ENCODE measurements at regions of chr7 and their contacts with region 1.

Region 1: GRCh38 chr7:5665094-5666025 is 116.1 kb downstream of the RNF216 start:
- DNase-seq: peak; percentile 77
- H3K4me3 ChIP-seq: no peak overlapping the region
- CTCF ChIP-seq: peak; percentile 84

Region 2: DNA sequence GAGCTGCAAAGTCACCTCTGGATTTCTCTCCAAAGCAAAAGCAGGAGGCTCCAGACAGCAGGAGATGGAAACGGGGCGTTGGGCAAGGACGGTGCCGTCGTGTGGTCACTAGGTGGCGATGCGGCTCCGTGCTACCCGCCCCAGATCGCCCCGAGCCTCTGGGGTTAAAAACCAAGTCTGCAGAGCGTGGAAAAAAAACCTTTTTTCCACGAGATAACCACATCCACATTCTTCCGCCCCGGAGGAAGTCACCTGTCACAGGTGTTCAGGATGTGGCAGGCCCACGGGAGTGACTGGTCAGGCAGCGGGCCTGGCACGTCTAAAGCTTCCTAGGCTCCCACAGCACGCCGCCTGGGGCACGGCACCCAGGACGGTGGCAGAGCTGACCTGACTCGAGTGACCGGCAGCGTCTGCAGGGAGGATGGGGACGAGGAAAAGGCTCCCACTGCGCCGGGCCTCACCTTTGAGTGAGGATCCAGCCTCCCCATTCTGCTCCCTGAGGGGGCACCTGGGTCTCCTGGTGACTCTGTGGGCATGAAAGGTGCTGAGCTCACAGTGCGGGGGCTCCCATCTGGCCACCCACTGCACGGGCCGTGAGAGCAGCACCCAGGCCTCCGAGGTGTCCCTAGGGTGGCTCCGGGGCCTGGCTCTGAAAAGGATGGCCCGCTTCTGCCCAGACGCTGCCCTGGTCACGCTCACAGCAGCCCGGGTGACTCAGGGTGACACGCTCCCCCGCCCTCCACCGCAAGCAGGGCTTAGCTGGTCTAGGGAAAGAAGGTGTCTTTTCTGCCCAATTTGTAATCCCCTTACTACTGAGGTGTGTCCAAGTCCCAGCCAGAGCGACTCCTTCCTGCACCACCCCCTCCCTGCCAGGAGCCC is 170.4 kb before region 1 on chr7:
- in situ Hi-C with region 1: loop called (anchors 5 kb)
- DNase-seq: peak; percentile 49
- H3K4me3 ChIP-seq: no peak overlapping the region
- CTCF ChIP-seq: peak; percentile 92

Region 3: DNA sequence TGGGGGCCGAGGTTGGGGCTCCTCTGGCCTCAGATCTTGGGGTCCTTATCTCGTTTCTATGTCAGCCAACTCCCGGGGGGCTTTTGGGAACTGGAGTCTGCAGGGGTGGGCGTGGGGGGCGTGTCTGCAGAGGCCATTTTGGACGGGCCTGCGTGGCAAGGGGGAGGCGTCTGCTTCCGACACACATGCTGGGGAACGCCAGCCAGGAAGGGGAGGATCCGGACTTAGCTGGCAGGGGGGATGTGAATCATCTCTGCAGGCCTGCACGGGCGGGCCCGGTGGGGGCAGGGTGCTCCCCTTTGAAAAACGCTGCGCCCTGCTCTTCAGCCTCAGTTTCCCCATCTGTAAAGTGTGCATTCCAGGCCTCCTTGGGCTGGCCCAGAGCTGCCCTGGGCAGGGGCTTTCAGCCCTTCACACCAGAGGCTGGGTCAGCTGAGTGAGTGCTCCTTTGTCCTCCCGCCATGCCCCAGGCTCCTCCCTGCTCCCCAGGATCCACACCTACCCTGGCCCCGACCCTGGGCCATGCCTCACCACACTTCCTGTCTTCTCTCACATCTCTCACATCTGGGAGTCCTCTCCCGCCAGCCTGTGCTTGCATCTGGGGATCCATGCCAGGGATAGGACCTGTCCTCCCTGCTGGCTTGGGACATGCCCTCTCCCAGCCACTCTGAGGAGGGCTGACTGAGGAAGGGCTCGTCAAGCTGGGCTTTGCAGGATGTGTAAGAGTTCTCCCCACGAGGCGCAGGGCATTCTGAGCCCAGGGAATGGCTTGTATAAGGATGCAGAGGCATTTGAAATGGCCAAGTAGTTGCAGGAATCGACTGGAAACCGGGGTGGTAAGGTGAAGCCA is 69.1 kb before region 1 on chr7:
- in situ Hi-C with region 1: loop called (anchors 5 kb)
- DNase-seq: peak; percentile 86
- H3K4me3 ChIP-seq: peak overlapping the region; percentile 83
- CTCF ChIP-seq: no peak

Region 4: GRCh38 chr7:5625938-5626337 is 39.4 kb before region 1 on chr7:
- in situ Hi-C with region 1: no loop called
- DNase-seq: peak; percentile 49
- H3K4me3 ChIP-seq: no peak overlapping the region
- CTCF ChIP-seq: peak; percentile 8

Measured in astrocyte of the cerebellum (primary cell).